ENCODE measurements at regions of chr9 and their contacts with region 1.

Region 1: DNA sequence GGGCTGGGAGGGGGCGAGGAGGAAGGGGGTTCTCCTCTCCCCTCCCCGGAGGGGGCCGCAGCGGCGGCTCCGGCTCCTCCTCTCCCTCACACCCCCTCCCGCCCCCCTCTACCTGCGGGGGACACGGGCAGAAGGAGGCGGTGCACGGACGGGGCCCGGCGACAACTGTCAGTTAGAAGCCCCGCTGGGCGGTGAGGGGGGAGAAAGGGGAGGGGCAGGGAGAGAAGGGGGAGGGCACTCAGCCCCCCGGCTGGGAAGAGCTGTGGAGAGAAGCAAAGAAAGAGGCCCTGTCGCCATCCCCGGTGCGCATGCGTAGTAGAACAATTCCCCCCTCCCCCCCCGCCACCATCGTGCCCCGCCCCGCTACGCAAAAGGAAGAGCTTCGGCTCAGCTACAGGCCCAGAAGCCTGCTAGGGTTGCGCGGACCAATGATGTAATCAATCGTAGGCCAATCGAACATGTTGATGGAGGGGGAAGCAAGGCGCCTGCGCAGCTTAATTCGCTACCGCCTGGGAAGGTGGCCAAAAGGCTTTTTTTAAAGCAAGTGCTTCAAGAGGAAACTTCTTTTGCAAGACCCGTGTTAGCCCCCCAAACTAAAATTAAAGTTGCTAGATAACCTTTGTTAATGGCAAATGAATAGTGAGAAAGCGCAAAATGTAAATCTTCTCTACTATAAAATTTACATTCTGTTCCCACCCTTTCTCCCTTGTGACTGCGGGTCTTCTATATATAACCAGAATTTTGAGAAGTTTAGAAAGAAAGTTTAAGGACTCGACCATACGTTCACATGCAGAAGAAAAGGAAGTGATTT is 7.0 kb downstream of the RANBP6 start:
- DNase-seq: peak; percentile 89 to 95
- H3K4me3 ChIP-seq: peak overlapping the region; percentile 70
- H3K4me3 Mint-ChIP-seq: peak overlapping the region; percentile 89
- H3K27ac Mint-ChIP-seq: peak overlapping the region; percentile 19
- H3K4me1 ChIP-seq: peaks cover 7% of the 10 kb centered on the region; the same call in 1 of the 2 replicates
- H3K4me1 Mint-ChIP-seq: peaks cover 19% of the 10 kb centered on the region
- H3K27me3 ChIP-seq: no peaks in the 10 kb centered on the region
- H3K27me3 Mint-ChIP-seq: no peaks in the 10 kb centered on the region
- CTCF ChIP-seq: no peak

Region 2: DNA sequence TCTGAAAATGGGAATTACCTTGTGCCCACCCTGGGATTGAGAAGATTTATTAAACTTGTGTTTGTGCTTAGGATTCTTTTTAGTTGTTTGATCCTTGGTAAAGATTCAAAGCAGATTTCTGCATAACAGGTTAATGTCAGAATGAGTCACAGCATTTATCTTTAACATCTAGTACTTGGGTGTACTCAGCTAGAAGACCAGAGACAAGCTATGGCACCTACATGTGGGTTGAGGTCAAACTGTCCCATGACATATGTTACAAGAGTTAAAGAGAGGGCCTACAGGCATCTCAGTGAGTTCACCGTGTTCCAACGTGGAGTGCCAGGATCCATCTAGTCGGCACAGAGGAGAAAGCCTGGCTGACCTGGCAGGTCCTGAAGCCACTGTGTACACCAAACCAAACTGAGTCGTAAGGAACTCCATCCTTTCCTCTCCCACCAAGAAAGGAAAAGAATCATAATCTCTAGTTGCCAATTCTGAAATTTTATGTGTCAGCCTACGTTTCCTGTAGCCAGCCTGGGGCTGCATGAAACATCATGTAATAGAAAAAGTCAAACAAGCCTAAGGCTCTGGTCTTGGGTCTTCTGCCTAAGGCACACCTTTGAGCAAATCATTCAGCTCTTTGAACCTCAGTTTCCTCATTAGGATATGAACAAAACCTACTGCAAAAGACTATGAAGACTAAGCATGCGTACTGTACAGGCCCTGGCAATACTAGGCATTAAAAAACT is 1142.0 kb before region 1 on chr9:
- CTCF ChIA-PET with region 1: no interaction called
- POLR2A ChIA-PET with region 1: interaction called, 11 read pairs
- intact Hi-C with region 1: no loop called
- DNase-seq: no peak
- H3K4me3 ChIP-seq: no peak overlapping the region
- H3K4me3 Mint-ChIP-seq: no peak overlapping the region
- H3K27ac Mint-ChIP-seq: no peak overlapping the region
- H3K4me1 ChIP-seq: peaks cover 8% of the 10 kb centered on the region
- H3K4me1 Mint-ChIP-seq: peaks cover 6% of the 10 kb centered on the region
- H3K27me3 ChIP-seq: no peaks in the 10 kb centered on the region
- H3K27me3 Mint-ChIP-seq: no peaks in the 10 kb centered on the region
- CTCF ChIP-seq: no peak

Region 3: GRCh38 chr9:5886114-5886939 is 122.0 kb before region 1 on chr9:
- CTCF ChIA-PET with region 1: interaction called, 4 read pairs
- POLR2A ChIA-PET with region 1: no interaction called
- intact Hi-C with region 1: loop called (anchors 2 kb)
- DNase-seq: peak; percentile 76 to 83
- H3K4me3 ChIP-seq: no peak overlapping the region
- H3K4me3 Mint-ChIP-seq: no peak overlapping the region
- H3K27ac Mint-ChIP-seq: no peak overlapping the region
- H3K4me1 ChIP-seq: no peaks in the 10 kb centered on the region
- H3K4me1 Mint-ChIP-seq: no peaks in the 10 kb centered on the region
- H3K27me3 ChIP-seq: no peaks in the 10 kb centered on the region
- H3K27me3 Mint-ChIP-seq: no peaks in the 10 kb centered on the region
- CTCF ChIP-seq: peak; percentile 83 to 85

Region 4: GRCh38 chr9:7963026-7963425 is 1954.7 kb after region 1 on chr9:
- CTCF ChIA-PET with region 1: no interaction called
- POLR2A ChIA-PET with region 1: no interaction called
- intact Hi-C with region 1: no loop called
- DNase-seq: no peak
- H3K4me3 ChIP-seq: no peak overlapping the region
- H3K4me3 Mint-ChIP-seq: no peak overlapping the region
- H3K27ac Mint-ChIP-seq: no peak overlapping the region
- H3K4me1 ChIP-seq: peaks cover 15% of the 10 kb centered on the region
- H3K4me1 Mint-ChIP-seq: peaks cover 6% of the 10 kb centered on the region
- H3K27me3 ChIP-seq: no peaks in the 10 kb centered on the region
- H3K27me3 Mint-ChIP-seq: no peaks in the 10 kb centered on the region
- CTCF ChIP-seq: no peak